Vagina (tissue), 2 donors: ENCODE measurements at regions of chr15 and their contacts with region 1.

Region 1: DNA sequence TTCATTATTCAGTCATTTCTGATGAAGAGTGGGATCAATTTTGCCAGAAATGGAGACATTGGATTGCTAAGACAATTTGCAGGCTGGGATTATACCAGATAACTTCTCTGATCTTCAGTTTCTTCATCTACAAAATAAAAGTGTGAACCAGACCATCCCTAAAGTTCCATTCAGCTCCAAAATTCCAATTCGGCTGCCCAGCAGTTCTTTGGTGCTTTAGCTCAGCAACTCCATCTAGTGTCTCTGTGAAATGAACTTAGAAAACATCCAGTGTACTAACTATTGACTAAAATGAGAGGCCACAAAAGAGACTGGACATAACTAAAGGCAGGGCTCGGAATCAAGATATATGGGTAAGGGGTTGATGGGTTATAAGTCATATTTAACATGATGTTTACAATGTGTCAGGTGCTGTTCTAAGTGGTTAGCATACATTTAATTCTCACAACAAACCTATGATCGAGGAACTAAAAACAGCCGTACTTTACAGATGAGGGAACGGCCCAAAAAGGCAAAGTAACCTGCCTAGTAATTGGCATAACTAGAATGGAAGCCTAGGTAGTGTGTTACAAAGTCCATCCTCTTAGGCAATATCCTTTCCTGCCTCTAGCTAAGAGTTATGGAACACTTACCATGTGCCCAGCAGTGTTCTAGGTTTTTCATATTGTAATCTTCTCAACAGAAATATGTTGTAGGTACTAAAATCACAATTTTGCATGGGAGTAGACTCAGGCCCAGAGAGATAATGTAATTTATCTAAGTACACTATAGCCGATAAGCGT is 17.0 kb downstream of the THAP10 start:
- DNase-seq: no peak
- H3K4me3 ChIP-seq: no peak overlapping the region
- H3K27ac ChIP-seq: no peak overlapping the region
- H3K4me1 ChIP-seq: no peaks in the 10 kb centered on the region
- H3K27me3 ChIP-seq: no peaks in the 10 kb centered on the region
- CTCF ChIP-seq: peak; percentile 8 to 41 (median 33)
- POLR2A ChIP-seq: no peak

Region 2: DNA sequence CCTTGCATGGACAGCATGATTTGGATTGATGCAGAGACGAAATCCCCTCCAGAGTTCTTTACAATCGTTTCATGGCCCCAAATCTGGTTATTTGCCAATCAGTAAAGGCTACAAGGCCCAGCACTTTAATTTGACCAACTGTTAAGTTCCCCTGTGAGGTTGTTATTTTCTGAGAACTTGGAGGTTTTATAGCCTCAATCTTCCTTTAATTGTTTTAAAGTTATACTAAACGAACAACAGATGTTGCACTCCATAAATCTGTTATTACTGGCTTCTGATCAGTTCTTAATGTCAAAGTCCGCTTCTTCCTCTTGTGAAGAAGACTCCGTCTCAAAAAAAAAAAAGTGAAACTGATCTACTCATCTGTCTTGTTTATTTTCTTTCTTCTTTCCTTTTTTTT is 52.0 kb before region 1 on chr15:
- intact Hi-C with region 1: loop called (anchors 5 kb)
- DNase-seq: no peak
- H3K4me3 ChIP-seq: no peak overlapping the region
- H3K27ac ChIP-seq: no peak overlapping the region
- H3K4me1 ChIP-seq: peaks cover 25% of the 10 kb centered on the region
- H3K27me3 ChIP-seq: no peaks in the 10 kb centered on the region
- CTCF ChIP-seq: no peak
- POLR2A ChIP-seq: no peak